Calu3 (cell line): ENCODE measurements at regions of chr9 and their contacts with region 1.

Region 1: GRCh38 chr9:69155341-69156030 is 18.6 kb upstream of the TJP2 start:
- DNase-seq: peak; percentile 29
- H3K4me3 Mint-ChIP-seq: peak overlapping the region; percentile 50
- H3K27ac Mint-ChIP-seq: peak overlapping the region; percentile 89
- H3K4me1 Mint-ChIP-seq: peaks cover 31% of the 10 kb centered on the region
- H3K27me3 Mint-ChIP-seq: no peaks in the 10 kb centered on the region
- CTCF ChIP-seq: no peak

Region 2: DNA sequence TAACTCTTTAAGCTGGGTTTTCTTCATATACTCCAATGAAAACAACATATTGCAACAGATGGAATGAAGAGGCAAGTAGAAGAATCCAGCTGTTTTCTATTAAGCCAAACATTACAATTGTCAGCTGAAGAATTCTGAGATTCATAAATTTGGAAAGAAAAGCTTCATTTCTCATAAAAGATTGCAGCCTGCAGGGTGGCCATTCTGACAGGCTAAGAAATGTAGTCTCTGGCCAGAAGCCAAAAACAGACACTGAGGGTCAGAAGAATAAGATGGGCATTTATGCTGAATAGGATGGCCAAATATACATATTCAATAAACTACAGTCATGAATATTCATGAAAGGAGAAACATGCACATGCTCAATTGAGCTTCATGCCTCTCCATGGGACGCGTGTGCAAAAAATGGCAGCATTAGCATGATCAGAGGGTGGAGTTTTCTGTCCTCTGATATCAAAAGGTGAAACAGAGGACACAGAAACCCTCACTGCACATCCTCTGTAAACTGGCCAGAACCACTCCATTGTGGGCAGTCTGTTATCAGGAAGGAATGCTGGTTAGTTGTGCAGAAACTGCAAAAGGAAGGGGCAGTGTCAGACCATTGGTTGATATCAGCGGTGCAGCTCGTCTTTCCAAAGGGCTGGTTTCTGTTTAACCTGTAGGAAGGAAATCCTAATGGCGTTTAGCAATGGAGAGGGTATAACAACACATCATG is 69.8 kb before region 1 on chr9:
- CTCF ChIA-PET with region 1: no interaction called
- intact Hi-C with region 1: no loop called
- DNase-seq: no peak
- H3K4me3 Mint-ChIP-seq: no peak overlapping the region
- H3K27ac Mint-ChIP-seq: no peak overlapping the region
- H3K4me1 Mint-ChIP-seq: peaks cover 36% of the 10 kb centered on the region
- H3K27me3 Mint-ChIP-seq: no peaks in the 10 kb centered on the region
- CTCF ChIP-seq: no peak

Region 3: DNA sequence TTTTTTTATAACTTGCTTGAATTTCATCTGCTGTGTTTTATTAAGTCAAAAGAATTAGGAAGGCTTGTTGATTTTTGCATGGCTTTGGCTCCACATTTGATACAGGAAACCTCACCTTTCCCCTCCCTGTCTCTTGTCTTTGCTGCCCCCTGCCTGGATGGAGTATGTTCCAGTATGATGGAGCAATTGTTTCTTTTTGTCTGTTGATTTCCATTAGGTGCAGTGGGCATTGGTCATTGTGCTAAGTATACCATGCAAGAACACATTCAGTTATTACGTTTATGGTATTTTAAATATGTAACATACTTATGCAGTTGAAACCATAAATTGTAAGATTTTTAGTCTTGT is 38.2 kb after region 1 on chr9:
- CTCF ChIA-PET with region 1: interaction called, 6 read pairs
- intact Hi-C with region 1: loop called (anchors 2 kb)
- DNase-seq: no peak
- H3K4me3 Mint-ChIP-seq: no peak overlapping the region
- H3K27ac Mint-ChIP-seq: no peak overlapping the region
- H3K4me1 Mint-ChIP-seq: peaks cover 19% of the 10 kb centered on the region
- H3K27me3 Mint-ChIP-seq: no peaks in the 10 kb centered on the region
- CTCF ChIP-seq: no peak

Region 4: DNA sequence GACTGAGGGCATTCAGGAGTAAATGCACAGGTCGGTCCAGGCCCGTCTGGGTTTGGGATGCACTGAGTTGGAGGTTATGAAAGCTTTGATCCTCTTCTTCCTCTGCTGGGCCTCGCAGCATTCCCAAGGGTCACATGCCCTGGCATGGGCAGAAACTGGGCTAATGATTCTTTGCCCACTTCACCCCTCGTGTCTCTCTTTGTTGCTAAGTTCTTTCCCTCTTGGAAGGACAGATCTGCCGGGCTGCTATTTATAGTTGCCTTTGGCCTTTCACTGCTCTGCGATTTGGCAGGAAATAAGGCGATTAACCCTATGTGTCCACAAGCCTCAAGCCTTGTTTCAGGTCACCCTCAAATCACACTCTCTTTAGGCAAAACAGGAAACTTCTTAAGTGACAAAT is 236.5 kb after region 1 on chr9:
- CTCF ChIA-PET with region 1: no interaction called
- intact Hi-C with region 1: no loop called
- DNase-seq: no peak
- H3K4me3 Mint-ChIP-seq: no peak overlapping the region
- H3K27ac Mint-ChIP-seq: no peak overlapping the region
- H3K4me1 Mint-ChIP-seq: peaks cover 9% of the 10 kb centered on the region
- H3K27me3 Mint-ChIP-seq: no peaks in the 10 kb centered on the region
- CTCF ChIP-seq: no peak

Region 5: DNA sequence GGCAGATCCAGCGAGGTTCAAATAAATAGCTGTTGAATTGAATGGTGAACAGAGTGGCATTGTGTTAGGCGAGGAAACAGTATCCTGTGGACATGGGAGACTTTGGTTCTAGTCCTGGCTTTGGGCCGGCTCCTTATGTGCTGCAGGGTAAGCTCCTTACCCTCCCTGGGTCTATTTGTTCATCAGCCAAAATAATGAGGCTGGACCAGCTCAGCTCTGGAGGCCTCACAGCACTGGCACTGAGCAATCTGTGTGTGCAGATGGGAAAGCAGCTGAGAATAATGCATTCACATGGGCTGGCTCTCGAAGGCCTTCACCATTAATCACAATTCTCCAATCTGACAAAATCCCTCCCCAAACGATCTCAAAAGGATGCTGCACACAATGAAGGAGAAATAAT is 434.8 kb after region 1 on chr9:
- CTCF ChIA-PET with region 1: no interaction called
- intact Hi-C with region 1: no loop called
- DNase-seq: no peak
- H3K4me3 Mint-ChIP-seq: no peak overlapping the region
- H3K27ac Mint-ChIP-seq: no peak overlapping the region
- H3K4me1 Mint-ChIP-seq: no peaks in the 10 kb centered on the region
- H3K27me3 Mint-ChIP-seq: no peaks in the 10 kb centered on the region
- CTCF ChIP-seq: no peak